Breast epithelium (tissue), 4 donors: ENCODE measurements at regions of chr9 and their contacts with region 1.

Region 1: DNA sequence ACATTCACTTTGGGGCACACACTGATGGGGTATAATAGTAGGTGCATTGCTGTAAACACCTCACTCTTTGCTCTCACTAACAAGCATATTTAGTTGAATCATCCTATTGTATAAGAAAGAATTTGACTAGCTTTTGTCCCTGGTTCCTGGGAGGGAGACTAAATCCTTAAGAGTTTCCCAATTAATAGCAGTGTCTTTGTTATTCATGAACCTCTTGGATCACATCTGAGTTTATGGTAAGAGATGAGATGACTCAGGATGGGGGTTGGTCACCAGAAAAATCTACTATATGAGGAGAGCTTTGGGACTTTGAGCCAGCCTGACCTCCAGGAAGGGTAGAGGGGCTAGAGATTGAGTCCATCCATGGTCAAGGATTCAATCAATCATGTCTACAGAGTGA is 56.8 kb downstream of the PUM3 start:
- DNase-seq: no peak
- H3K4me3 ChIP-seq: no peak overlapping the region
- H3K27ac ChIP-seq: no peak overlapping the region
- H3K4me1 ChIP-seq: no peaks in the 10 kb centered on the region
- H3K27me3 ChIP-seq: no peaks in the 10 kb centered on the region
- CTCF ChIP-seq: no peak
- POLR2A ChIP-seq: no peak

Region 2: DNA sequence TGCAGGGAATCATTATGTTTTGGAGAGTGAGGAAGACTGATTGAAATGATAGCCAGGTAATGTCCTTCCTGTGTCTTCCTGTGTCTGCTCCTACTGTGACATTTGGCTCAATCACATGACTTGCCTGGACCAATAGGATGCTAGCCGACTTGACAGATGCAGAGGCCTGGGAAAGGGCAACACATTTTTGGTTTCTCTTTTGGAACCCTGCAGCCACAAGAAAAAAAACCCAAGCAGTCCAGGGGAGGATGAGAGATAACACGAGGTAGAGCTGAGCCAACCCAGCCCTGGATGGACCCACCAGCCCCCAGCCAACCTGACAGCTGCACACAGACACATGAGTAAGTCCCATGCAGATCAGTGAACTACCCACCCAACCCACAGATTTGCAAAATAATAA is 1028.1 kb before region 1 on chr9:
- intact Hi-C with region 1: no loop called
- DNase-seq: no peak
- H3K4me3 ChIP-seq: no peak overlapping the region
- H3K27ac ChIP-seq: no peak overlapping the region
- H3K4me1 ChIP-seq: no peaks in the 10 kb centered on the region
- H3K27me3 ChIP-seq: no peaks in the 10 kb centered on the region
- CTCF ChIP-seq: no peak
- POLR2A ChIP-seq: no peak

Region 3: GRCh38 chr9:2809691-2810433 is 22.8 kb after region 1 on chr9:
- intact Hi-C with region 1: loop called (anchors 2 kb)
- DNase-seq: no peak
- H3K4me3 ChIP-seq: no peak overlapping the region
- H3K27ac ChIP-seq: peak overlapping the region; percentile 27 to 36
- H3K4me1 ChIP-seq: no peaks in the 10 kb centered on the region
- H3K27me3 ChIP-seq: no peaks in the 10 kb centered on the region
- CTCF ChIP-seq: no peak
- POLR2A ChIP-seq: no peak